GM12878 (cell line): ENCODE measurements at regions of chr1 and their contacts with region 1.

Region 1: DNA sequence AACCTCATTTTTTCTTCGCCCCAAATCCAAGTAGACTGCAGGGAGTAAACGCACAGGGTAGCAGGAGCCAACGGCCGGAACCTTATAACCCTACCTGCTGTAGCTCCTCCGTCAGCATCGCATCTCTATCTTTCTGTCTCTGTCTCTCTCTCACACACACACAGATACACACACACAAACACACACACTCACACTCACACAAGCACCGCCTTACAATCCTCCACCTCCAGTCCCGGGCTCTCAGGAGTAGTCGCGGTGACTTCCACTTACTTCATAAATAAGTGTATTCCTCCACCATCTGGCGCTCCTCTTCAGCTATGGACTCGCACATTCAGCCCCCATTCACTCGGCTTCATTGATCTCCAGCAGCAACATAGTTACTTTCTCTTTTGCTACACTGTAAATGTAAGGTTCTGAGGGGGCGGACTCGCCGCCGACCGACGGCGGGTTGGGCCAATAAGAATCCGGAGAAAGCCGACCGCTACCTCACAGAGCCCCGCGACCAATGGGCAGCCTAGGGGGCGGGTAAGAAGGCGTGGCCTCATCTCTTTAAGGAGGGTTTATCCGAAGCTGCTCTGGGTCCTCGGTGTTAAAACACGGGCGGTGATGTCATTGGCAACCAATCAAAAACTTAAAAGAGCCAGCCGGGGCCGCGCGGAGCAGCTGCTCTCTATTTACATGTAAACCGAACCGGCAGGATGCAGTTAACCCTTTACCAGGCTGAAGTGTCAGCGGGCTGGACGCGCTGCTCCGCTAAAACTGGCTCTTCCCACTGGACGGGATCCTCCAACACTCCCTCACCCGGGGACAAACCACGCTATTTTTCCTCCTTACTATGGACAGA is at the start of gene DUSP10:
- DNase-seq: peak; percentile 97
- ATAC-seq: peak; percentile 75
- H3K4me3 ChIP-seq: peak within 1 kb of the TSS; percentile 90
- H3K27ac ChIP-seq: peak within 1 kb of the TSS; percentile 89
- H3K4me1 ChIP-seq: peaks cover 19% of the 10 kb centered on the region
- H3K27me3 ChIP-seq: no peaks in the 10 kb centered on the region
- CTCF ChIP-seq: peak in 2 of 3 experiments; percentile 9 to 46; a peak in 2 of 6 replicates
- EP300 ChIP-seq: no peak
- POLR2A ChIP-seq: peak; percentile 72
- RAD21 ChIP-seq: peak; percentile 47
- polyA plus RNA-seq, gene DUSP10: 20.3 to 32.1 TPM

Region 2: GRCh38 chr1:220879076-220879508 is 862.8 kb before region 1 on chr1 and contains the start of gene HLX:
- CTCF ChIA-PET with region 1: interaction called, 4 read pairs
- POLR2A ChIA-PET with region 1: no interaction called
- RAD21 ChIA-PET with region 1: no interaction called
- SMC1A ChIA-PET with region 1: no interaction called
- in situ Hi-C with region 1: no loop called
- intact Hi-C with region 1: loop called (anchors 2 kb)
- DNase-seq: no peak
- ATAC-seq: peak; percentile 82
- H3K4me3 ChIP-seq: peak within 1 kb of the TSS; percentile 68
- H3K27ac ChIP-seq: no peak within 1 kb of the TSS
- H3K4me1 ChIP-seq: peaks cover 15% of the 10 kb centered on the region
- H3K27me3 ChIP-seq: peaks cover 0 to 17% of the 10 kb centered on the region in 2 experiments; a peak in 3 of 4 replicates
- CTCF ChIP-seq: no peak
- EP300 ChIP-seq: no peak
- POLR2A ChIP-seq: no peak
- RAD21 ChIP-seq: no peak
- polyA plus RNA-seq, gene HLX: 0.11 to 0.22 TPM

Region 3: GRCh38 chr1:221394011-221394544 is 347.9 kb before region 1 on chr1:
- CTCF ChIA-PET with region 1: no interaction called
- POLR2A ChIA-PET with region 1: no interaction called
- RAD21 ChIA-PET with region 1: no interaction called
- SMC1A ChIA-PET with region 1: no interaction called
- in situ Hi-C with region 1: no loop called
- intact Hi-C with region 1: no loop called
- DNase-seq: no peak
- ATAC-seq: no peak
- H3K4me3 ChIP-seq: no peak overlapping the region
- H3K27ac ChIP-seq: no peak overlapping the region
- H3K4me1 ChIP-seq: no peaks in the 10 kb centered on the region
- H3K27me3 ChIP-seq: no peaks in the 10 kb centered on the region
- CTCF ChIP-seq: no peak
- EP300 ChIP-seq: no peak
- POLR2A ChIP-seq: no peak
- RAD21 ChIP-seq: no peak

Region 4: DNA sequence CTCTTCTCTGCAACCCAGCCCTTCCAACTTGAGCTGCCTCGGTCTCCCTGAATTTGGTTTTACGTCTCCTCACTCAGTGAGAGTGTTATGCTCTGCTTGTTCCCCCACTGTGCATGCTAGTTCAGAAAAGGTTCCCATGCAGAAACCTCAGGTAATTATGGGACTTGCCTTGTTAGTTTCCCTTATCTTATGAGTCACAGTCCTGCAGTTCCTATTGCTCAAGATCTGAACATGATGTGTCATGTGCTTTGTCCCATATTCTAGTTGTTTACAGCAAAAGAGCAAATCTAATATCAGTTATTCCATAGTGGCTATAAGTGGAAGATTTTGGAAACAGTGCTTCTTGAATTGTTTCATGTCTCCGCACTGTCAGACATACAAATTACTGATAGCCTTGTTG is 74.4 kb before region 1 on chr1:
- CTCF ChIA-PET with region 1: interaction called, 3 read pairs
- POLR2A ChIA-PET with region 1: no interaction called
- RAD21 ChIA-PET with region 1: interaction called, 5 read pairs
- SMC1A ChIA-PET with region 1: interaction called, 11 read pairs
- in situ Hi-C with region 1: no loop called
- intact Hi-C with region 1: no loop called
- DNase-seq: peak; percentile 72
- ATAC-seq: peak; percentile 98
- H3K4me3 ChIP-seq: no peak overlapping the region
- H3K27ac ChIP-seq: peak overlapping the region; percentile 59
- H3K4me1 ChIP-seq: peaks cover 4% of the 10 kb centered on the region; the same call in 1 of the 2 replicates
- H3K27me3 ChIP-seq: no peaks in the 10 kb centered on the region
- CTCF ChIP-seq: no peak
- EP300 ChIP-seq: peak; percentile 71 to 75
- POLR2A ChIP-seq: no peak
- RAD21 ChIP-seq: 0 out of 2 replicates have a peak, but pooled peaks have one; percentile 19

Region 5: DNA sequence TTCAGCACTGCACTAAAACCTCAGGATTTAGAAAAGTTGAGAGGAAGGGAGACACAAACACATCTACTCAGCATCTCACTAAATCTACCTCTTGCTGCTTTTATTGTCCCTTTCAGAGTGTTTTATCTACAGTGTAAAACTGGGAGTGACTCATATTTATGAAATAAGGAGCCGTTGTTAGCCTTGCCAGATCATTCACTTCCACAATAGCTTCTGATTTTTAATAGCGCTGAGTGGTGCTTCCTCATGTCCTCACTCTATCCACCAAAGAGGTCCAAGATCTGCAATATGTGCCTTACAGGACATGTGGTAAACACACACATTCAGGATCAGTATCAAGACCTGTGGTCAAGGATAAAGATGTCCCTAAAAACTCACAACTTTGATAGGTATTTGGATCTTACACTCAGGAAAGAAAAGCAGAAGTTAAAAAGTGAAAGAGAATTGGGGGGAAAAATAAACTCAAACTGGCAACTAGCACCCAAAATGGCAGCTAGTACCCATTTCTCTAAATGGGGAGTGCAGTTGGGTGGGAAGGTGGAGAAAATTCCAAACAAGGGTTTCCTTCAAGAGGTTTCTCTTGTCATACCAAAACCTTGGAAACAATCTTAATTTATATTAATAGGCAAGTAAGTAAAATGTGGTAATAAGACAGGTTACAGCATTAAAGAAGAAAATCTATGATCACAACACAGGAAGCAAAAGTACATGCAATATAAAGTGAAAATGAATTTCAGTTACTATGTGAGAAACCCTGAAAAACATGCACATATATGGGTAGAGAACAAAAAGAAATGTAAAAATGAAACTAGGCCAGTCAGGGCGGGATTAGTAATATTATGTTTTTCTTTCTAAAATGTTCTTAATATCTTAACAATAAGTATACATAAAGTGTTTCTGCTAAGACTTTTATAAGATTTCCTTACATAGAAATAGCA is 15.9 kb before region 1 on chr1:
- CTCF ChIA-PET with region 1: interaction called, 25 read pairs
- POLR2A ChIA-PET with region 1: interaction called, 92 read pairs
- RAD21 ChIA-PET with region 1: interaction called, 66 read pairs
- SMC1A ChIA-PET with region 1: interaction called, 199 read pairs
- in situ Hi-C with region 1: no loop called
- intact Hi-C with region 1: no loop called
- DNase-seq: no peak
- ATAC-seq: peak; percentile 67
- H3K4me3 ChIP-seq: peak overlapping the region; percentile 6; the same call in 1 of the 2 replicates
- H3K27ac ChIP-seq: peak overlapping the region; percentile 92
- H3K4me1 ChIP-seq: peaks cover 52% of the 10 kb centered on the region
- H3K27me3 ChIP-seq: no peaks in the 10 kb centered on the region
- CTCF ChIP-seq: no peak
- EP300 ChIP-seq: no peak
- POLR2A ChIP-seq: no peak
- RAD21 ChIP-seq: no peak

Region 6: GRCh38 chr1:221777431-221778072 is 35.6 kb after region 1 on chr1:
- CTCF ChIA-PET with region 1: interaction called, 64 read pairs
- POLR2A ChIA-PET with region 1: interaction called, 20 read pairs
- RAD21 ChIA-PET with region 1: interaction called, 244 read pairs
- SMC1A ChIA-PET with region 1: interaction called, 201 read pairs
- in situ Hi-C with region 1: no loop called
- intact Hi-C with region 1: loop called (anchors 1 kb)
- DNase-seq: peak; percentile 99
- ATAC-seq: peak; percentile 73
- H3K4me3 ChIP-seq: peak overlapping the region; percentile 47; the same call in 1 of the 2 replicates
- H3K27ac ChIP-seq: peak overlapping the region; percentile 89
- H3K4me1 ChIP-seq: peaks cover 61% of the 10 kb centered on the region
- H3K27me3 ChIP-seq: no peaks in the 10 kb centered on the region
- CTCF ChIP-seq: peak in 1 of 3 experiments; percentile 9; a peak in 1 of 6 replicates
- EP300 ChIP-seq: peak; percentile 97 to 98
- POLR2A ChIP-seq: no peak
- RAD21 ChIP-seq: peak; percentile 38

Region 7: GRCh38 chr1:221886743-221887413 is 144.9 kb after region 1 on chr1:
- CTCF ChIA-PET with region 1: interaction called, 12 read pairs
- POLR2A ChIA-PET with region 1: no interaction called
- RAD21 ChIA-PET with region 1: interaction called, 3 read pairs
- SMC1A ChIA-PET with region 1: interaction called, 4 read pairs
- in situ Hi-C with region 1: no loop called
- intact Hi-C with region 1: no loop called
- DNase-seq: no peak
- ATAC-seq: no peak
- H3K4me3 ChIP-seq: no peak overlapping the region
- H3K27ac ChIP-seq: no peak overlapping the region
- H3K4me1 ChIP-seq: no peaks in the 10 kb centered on the region; the same call in 1 of the 2 replicates
- H3K27me3 ChIP-seq: no peaks in the 10 kb centered on the region
- CTCF ChIP-seq: no peak
- EP300 ChIP-seq: no peak
- POLR2A ChIP-seq: no peak
- RAD21 ChIP-seq: no peak